WTC11 (cell line): ENCODE measurements at regions of chr5 and their contacts with region 1.

Region 1: GRCh38 chr5:136062366-136063274 is 33.8 kb downstream of the TGFBI start:
- DNase-seq: peak; percentile 34
- ATAC-seq: peak; percentile 81
- H3K4me3 Mint-ChIP-seq: no peak overlapping the region
- H3K27ac Mint-ChIP-seq: no peak overlapping the region
- H3K4me1 Mint-ChIP-seq: peaks cover 10% of the 10 kb centered on the region
- H3K27me3 Mint-ChIP-seq: no peaks in the 10 kb centered on the region
- CTCF ChIP-seq: peak; percentile 17; the same call in 1 of the 2 replicates

Region 2: DNA sequence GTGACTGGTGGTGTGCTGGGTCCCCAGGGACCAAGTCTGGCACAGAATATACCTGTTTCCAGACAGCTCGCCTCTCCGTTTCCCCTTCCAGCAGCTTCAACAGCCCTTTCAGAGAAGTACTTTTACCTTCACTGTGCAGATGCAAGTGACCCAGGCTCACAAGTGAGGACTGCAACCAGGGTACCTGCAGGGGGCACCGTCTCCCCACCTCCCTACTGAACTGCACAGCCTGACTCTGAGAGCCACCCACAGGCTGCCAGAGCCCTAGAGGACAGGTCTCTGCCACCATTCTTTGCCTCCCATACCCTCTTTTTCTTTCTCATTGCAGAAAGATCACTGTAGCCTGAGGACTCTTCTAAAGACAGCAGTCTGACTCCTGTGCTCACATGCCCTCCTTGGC is 182.3 kb before region 1 on chr5:
- CTCF ChIA-PET with region 1: interaction called, 16 read pairs
- POLR2A ChIA-PET with region 1: no interaction called
- DNase-seq: peak; percentile 72
- ATAC-seq: peak; percentile 93
- H3K4me3 Mint-ChIP-seq: no peak overlapping the region
- H3K27ac Mint-ChIP-seq: no peak overlapping the region
- H3K4me1 Mint-ChIP-seq: peaks cover 22% of the 10 kb centered on the region
- H3K27me3 Mint-ChIP-seq: no peaks in the 10 kb centered on the region
- CTCF ChIP-seq: 0 out of 2 replicates have a peak, but pooled peaks have one; percentile 25

Region 3: GRCh38 chr5:135977375-135977928 is 85.2 kb before region 1 on chr5:
- CTCF ChIA-PET with region 1: interaction called, 31 read pairs
- POLR2A ChIA-PET with region 1: interaction called, 3 read pairs
- DNase-seq: peak; percentile 92
- ATAC-seq: peak; percentile 98
- H3K4me3 Mint-ChIP-seq: no peak overlapping the region
- H3K27ac Mint-ChIP-seq: no peak overlapping the region
- H3K4me1 Mint-ChIP-seq: peaks cover 25% of the 10 kb centered on the region
- H3K27me3 Mint-ChIP-seq: peaks cover 12% of the 10 kb centered on the region
- CTCF ChIP-seq: peak; percentile 74

Region 4: GRCh38 chr5:136028782-136029742 is 33.6 kb before region 1 on chr5 and contains the start of gene TGFBI:
- CTCF ChIA-PET with region 1: interaction called, 31 read pairs
- POLR2A ChIA-PET with region 1: no interaction called
- DNase-seq: peak; percentile 72
- ATAC-seq: peak; percentile 93
- H3K4me3 Mint-ChIP-seq: peak within 1 kb of the TSS; percentile 72
- H3K27ac Mint-ChIP-seq: no peak within 1 kb of the TSS
- H3K4me1 Mint-ChIP-seq: peaks cover 3% of the 10 kb centered on the region
- H3K27me3 Mint-ChIP-seq: peaks cover 70% of the 10 kb centered on the region
- CTCF ChIP-seq: no peak
- total RNA-seq, gene TGFBI: 7.2 to 9.1 TPM (median 7.8 TPM) in 3 replicates

Region 5: DNA sequence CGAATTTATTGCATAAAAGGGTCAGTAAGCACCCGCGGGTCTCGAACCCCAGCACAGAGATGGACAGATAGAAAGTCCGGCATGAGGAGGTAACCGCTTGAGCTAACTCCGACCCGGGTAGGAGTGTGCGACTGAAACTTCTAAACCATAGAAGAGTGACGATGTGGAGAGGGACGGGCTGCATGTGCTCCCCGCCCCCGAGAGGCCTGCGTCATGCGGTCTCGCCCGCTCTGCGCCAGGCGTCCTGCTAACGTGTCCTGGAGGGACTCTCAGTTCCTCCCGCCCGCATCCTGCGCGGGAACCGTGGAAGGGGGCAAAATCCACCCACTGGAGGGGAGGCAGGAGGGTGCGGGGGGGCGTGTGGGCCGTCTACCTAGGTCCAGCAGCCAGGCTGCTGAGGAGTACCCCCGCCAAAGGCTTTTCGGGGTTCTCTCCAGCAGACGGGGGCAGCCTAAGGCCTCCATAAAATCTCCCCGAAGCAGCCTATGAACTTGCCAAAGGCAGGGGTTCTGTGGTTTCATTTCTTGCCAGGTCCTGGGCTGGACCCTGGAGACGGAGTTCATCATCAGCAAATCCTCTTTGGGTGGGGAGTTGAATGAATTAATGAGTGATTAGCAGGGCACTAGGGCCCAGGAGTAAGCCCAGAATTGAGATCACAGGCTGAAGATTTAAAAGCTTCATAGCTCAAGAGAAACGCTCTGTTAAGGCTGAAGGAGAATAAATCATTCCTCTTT is 18.0 kb after region 1 on chr5:
- CTCF ChIA-PET with region 1: interaction called, 11 read pairs
- POLR2A ChIA-PET with region 1: no interaction called
- DNase-seq: peak; percentile 86
- ATAC-seq: peak; percentile 70
- H3K4me3 Mint-ChIP-seq: peak overlapping the region; percentile 85
- H3K27ac Mint-ChIP-seq: no peak overlapping the region; the same call in 1 of the 2 replicates
- H3K4me1 Mint-ChIP-seq: peaks cover 2% of the 10 kb centered on the region
- H3K27me3 Mint-ChIP-seq: peaks cover 27% of the 10 kb centered on the region
- CTCF ChIP-seq: no peak